ENCODE measurements at regions of chr5 and their contacts with region 1.

Region 1: GRCh38 chr5:165616490-165617430 is 2111.3 kb downstream of the MAT2B start:
- DNase-seq: peak; percentile 62
- ATAC-seq: peak; percentile 90
- H3K4me3 ChIP-seq: no peak overlapping the region
- H3K27ac ChIP-seq: no peak overlapping the region
- H3K4me1 ChIP-seq: peaks cover 2% of the 10 kb centered on the region; the same call in 1 of the 2 replicates
- H3K27me3 ChIP-seq: no peaks in the 10 kb centered on the region
- CTCF ChIP-seq: peak; percentile 43
- POLR2A ChIP-seq: no peak
- RAD21 ChIP-seq: peak; percentile 35; the same call in 1 of the 2 replicates

Region 2: DNA sequence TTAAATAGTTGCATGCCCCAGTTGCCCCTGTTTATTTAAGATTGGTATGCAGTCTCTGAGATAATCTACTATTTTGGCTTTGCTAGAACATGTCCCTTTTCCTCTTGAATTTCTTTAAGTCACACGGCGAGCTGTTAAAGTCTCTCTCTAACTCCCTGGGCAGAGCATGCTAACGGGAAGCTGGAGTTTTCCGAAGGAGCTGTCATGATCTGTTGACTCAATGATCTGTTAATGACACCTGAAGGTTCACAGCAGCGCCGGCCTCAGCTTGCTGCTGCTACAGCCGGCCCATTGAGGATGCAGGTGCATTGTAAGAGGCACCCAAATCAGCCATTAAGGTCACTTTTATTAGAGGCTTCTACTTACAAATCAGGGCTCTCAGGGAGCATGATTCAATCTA is 907.9 kb before region 1 on chr5:
- CTCF ChIA-PET with region 1: no interaction called
- POLR2A ChIA-PET with region 1: no interaction called
- dilution Hi-C with region 1: no loop called
- in situ Hi-C with region 1: no loop called
- intact Hi-C with region 1: no loop called
- DNase-seq: no peak
- ATAC-seq: no peak
- H3K4me3 ChIP-seq: no peak overlapping the region
- H3K27ac ChIP-seq: no peak overlapping the region
- H3K4me1 ChIP-seq: no peaks in the 10 kb centered on the region
- H3K27me3 ChIP-seq: no peaks in the 10 kb centered on the region
- CTCF ChIP-seq: no peak
- POLR2A ChIP-seq: no peak
- RAD21 ChIP-seq: no peak

Region 3: DNA sequence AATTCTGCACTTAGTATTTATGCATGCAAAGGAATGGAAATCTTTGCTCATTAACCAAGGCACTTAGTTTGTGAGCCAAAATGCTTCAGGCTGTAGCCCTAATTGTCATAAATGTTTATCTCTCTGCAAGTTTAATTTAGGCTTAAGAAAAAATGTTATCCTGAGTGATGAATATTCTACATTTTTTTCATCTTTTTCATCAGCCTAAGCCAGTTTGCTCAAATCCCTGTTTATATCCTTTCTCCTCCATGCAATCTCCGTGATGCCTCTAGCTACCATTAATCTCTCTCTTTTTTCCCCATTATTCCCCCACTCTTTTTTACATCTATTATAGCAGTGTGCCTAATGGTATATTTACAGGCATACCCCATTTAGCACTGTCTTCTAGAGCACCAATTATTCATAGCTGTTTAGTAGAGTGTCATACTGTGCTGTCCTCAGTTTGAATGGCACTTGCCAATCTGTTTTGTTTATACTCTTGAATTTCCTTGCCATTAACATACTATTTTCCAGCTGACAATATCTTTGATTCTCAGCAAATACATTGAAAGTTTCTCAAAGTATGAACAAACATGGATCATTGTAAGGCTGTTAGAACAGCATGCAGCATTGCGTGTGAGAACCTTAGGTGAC is 654.3 kb before region 1 on chr5:
- CTCF ChIA-PET with region 1: no interaction called
- POLR2A ChIA-PET with region 1: no interaction called
- dilution Hi-C with region 1: no loop called
- in situ Hi-C with region 1: no loop called
- intact Hi-C with region 1: loop called (anchors 10 kb)
- DNase-seq: no peak
- ATAC-seq: peak; percentile 74
- H3K4me3 ChIP-seq: no peak overlapping the region
- H3K27ac ChIP-seq: no peak overlapping the region
- H3K4me1 ChIP-seq: no peaks in the 10 kb centered on the region
- H3K27me3 ChIP-seq: no peaks in the 10 kb centered on the region
- CTCF ChIP-seq: no peak
- POLR2A ChIP-seq: no peak
- RAD21 ChIP-seq: no peak

Region 4: GRCh38 chr5:165227511-165227910 is 389.2 kb before region 1 on chr5:
- CTCF ChIA-PET with region 1: no interaction called
- POLR2A ChIA-PET with region 1: no interaction called
- dilution Hi-C with region 1: no loop called
- in situ Hi-C with region 1: no loop called
- intact Hi-C with region 1: loop called (anchors 5 kb)
- DNase-seq: no peak
- ATAC-seq: no peak
- H3K4me3 ChIP-seq: no peak overlapping the region
- H3K27ac ChIP-seq: no peak overlapping the region
- H3K4me1 ChIP-seq: no peaks in the 10 kb centered on the region; the same call in 1 of the 2 replicates
- H3K27me3 ChIP-seq: no peaks in the 10 kb centered on the region
- CTCF ChIP-seq: no peak
- POLR2A ChIP-seq: no peak
- RAD21 ChIP-seq: no peak

Region 5: DNA sequence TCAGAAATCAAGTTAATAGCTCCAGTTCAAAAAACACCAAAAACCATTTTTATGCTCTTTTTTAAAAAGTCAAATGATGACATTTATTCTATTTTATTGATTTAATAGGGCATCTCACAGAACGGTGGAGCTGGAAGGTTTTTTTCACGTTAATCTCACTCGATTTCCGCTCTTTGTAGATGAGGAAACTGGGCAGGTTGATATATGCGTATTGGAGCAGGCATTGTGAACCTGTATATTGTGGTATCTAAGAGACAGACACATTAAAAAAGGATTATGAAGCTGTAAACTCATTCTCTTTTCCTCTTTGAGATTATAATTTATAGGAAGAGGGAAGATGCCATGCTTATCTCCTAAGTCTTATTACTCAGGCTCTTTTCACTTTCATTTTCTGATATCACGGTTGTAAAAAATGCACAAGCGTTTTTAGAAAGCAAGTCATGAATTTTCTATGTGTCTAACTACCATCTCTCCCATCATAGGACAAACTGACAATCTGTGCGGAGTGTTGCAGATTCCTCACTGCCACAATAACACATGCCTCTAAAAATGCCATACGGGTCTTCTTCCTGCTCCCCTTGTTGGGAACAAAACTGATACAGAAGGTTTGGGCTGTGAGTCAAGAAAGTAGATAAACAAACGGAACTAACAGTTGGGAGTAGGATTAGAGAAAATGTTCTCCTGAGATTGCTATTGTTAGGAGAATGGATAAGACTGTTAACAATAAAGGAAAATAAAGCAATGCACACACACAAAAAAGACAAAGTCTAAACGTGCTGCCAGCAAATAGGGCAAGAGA is 113.7 kb before region 1 on chr5:
- CTCF ChIA-PET with region 1: no interaction called
- POLR2A ChIA-PET with region 1: no interaction called
- dilution Hi-C with region 1: no loop called
- in situ Hi-C with region 1: no loop called
- intact Hi-C with region 1: loop called (anchors 10 kb)
- DNase-seq: peak; percentile 18
- ATAC-seq: peak; percentile 75
- H3K4me3 ChIP-seq: peak overlapping the region; percentile 37; the same call in 1 of the 2 replicates
- H3K27ac ChIP-seq: peak overlapping the region; percentile 65; the same call in 1 of the 2 replicates
- H3K4me1 ChIP-seq: no peaks in the 10 kb centered on the region
- H3K27me3 ChIP-seq: no peaks in the 10 kb centered on the region
- CTCF ChIP-seq: no peak
- POLR2A ChIP-seq: no peak
- RAD21 ChIP-seq: no peak

Region 6: GRCh38 chr5:166102947-166103346 is 486.2 kb after region 1 on chr5:
- CTCF ChIA-PET with region 1: no interaction called
- POLR2A ChIA-PET with region 1: no interaction called
- dilution Hi-C with region 1: no loop called
- in situ Hi-C with region 1: no loop called
- intact Hi-C with region 1: no loop called
- DNase-seq: no peak
- ATAC-seq: no peak
- H3K4me3 ChIP-seq: no peak overlapping the region
- H3K27ac ChIP-seq: no peak overlapping the region
- H3K4me1 ChIP-seq: no peaks in the 10 kb centered on the region
- H3K27me3 ChIP-seq: no peaks in the 10 kb centered on the region
- CTCF ChIP-seq: no peak
- POLR2A ChIP-seq: no peak
- RAD21 ChIP-seq: no peak